ENCODE measurements at regions of chr17 and their contacts with region 1.

Region 1: GRCh38 chr17:42019509-42020404 is at the start of gene NKIRAS2:
- DNase-seq: peak; percentile 88 to 95 (median 92)
- ATAC-seq: peak; percentile 78
- H3K4me3 ChIP-seq: peak within 1 kb of the TSS; percentile 93
- H3K4me3 Mint-ChIP-seq: peak within 1 kb of the TSS; percentile 100
- H3K27ac ChIP-seq: peak within 1 kb of the TSS; percentile 64 to 80
- H3K27ac Mint-ChIP-seq: peak within 1 kb of the TSS; percentile 98
- H3K4me1 ChIP-seq: peaks cover 56% of the 10 kb centered on the region
- H3K4me1 Mint-ChIP-seq: peaks cover 66% of the 10 kb centered on the region
- H3K27me3 ChIP-seq: no peaks in the 10 kb centered on the region
- H3K27me3 Mint-ChIP-seq: no peaks in the 10 kb centered on the region
- CTCF ChIP-seq: peak; percentile 94
- total RNA-seq, gene NKIRAS2: 12.5 to 12.9 TPM

Region 2: DNA sequence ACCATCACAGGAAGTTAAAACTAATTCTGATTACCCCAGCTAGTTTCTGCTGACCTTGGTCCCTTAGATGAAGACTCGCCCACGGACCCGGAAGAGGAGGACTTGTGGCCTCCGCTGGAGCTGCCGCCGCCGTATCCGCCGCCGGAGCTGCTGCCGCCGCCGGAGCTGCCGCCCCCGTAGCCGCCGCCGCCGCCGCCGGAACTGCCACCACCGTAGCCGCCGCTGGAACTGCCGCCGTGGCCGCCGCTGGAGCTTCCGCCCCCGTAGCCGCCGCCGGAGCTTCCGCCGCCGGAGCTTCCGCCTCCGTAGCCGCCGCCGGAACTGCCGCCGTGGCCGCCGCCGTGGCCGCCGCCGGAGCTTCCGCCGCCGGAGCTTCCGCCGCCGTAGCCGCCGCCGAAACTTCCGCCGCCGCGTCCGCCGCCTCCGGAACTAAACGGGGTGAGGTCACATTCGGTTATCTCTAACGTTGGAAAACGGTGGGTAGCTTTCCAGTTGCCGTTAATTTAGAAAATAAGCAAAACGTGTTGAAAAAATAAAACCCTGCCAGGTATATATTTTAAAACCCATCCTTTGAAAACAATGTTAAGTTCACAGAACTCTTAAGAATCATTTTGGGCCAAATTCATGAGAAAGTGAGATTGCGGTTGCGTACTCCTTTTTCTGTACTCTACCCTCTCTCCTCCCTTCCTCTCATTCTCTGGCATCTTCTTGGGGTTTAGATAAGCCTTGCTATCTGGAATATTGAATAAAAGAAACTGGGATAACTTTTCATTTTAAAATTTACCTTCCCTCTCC is 1200.8 kb before region 1 on chr17:
- CTCF ChIA-PET with region 1: no interaction called
- POLR2A ChIA-PET with region 1: interaction called, 3 read pairs
- intact Hi-C with region 1: loop called in 1 of 2 experiments (anchors 5 kb)
- DNase-seq: peak; percentile 68 to 96 (median 80)
- ATAC-seq: peak; percentile 83
- H3K4me3 ChIP-seq: peak overlapping the region; percentile 75
- H3K4me3 Mint-ChIP-seq: peak overlapping the region; percentile 96
- H3K27ac ChIP-seq: peak overlapping the region; percentile 62 to 74
- H3K27ac Mint-ChIP-seq: peak overlapping the region; percentile 89
- H3K4me1 ChIP-seq: peaks cover 5% of the 10 kb centered on the region
- H3K4me1 Mint-ChIP-seq: peaks cover 33% of the 10 kb centered on the region
- H3K27me3 ChIP-seq: peaks cover 0 to 1% of the 10 kb centered on the region in 2 experiments
- H3K27me3 Mint-ChIP-seq: peaks cover 15% of the 10 kb centered on the region
- CTCF ChIP-seq: no peak

Region 3: GRCh38 chr17:41930009-41930832 is 89.5 kb before region 1 on chr17 and contains the start of gene ODAD4:
- CTCF ChIA-PET with region 1: interaction called, 10 read pairs
- POLR2A ChIA-PET with region 1: interaction called, 11 read pairs
- intact Hi-C with region 1: loop called in 1 of 2 experiments (anchors 2 kb)
- DNase-seq: peak; percentile 93 to 99 (median 95)
- ATAC-seq: peak; percentile 99
- H3K4me3 ChIP-seq: peak within 1 kb of the TSS; percentile 68
- H3K4me3 Mint-ChIP-seq: peak within 1 kb of the TSS; percentile 91
- H3K27ac ChIP-seq: peak within 1 kb of the TSS; percentile 75 to 92
- H3K27ac Mint-ChIP-seq: peak within 1 kb of the TSS; percentile 89
- H3K4me1 ChIP-seq: peaks cover 23% of the 10 kb centered on the region
- H3K4me1 Mint-ChIP-seq: peaks cover 19% of the 10 kb centered on the region
- H3K27me3 ChIP-seq: no peaks in the 10 kb centered on the region
- H3K27me3 Mint-ChIP-seq: no peaks in the 10 kb centered on the region
- CTCF ChIP-seq: peak; percentile 42
- total RNA-seq, gene ODAD4: 2.2 to 2.7 TPM

Region 4: DNA sequence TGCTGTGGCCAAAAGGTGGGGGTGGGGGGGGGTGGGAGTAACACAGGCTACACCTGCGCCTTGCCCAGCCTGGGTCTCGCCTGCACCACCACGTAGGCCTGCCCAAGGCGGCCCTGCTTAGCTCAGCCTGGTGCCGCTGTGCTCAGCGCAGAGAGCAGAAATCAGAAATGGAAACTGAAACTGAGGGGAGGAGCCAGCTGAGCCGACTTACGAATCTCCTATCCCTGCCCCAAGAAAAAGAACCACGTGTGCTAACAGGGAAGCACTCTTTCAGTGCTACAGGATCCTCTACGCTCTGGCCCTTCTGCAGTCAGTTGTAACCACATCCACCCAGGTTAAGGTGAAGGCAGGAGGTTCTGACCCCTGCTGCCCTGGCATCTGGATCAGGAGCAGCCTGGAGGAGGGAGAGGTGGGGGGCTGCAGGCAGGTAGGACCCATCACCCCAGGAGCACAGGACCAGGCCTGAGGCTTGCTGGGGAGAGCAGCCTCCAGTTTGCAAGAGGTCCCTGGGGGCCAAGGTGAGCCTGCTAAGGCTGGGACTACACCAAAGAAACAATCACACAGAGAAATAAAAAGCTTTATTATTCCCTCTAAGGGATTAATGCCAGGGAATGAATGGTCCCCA is 92.9 kb after region 1 on chr17 and contains the start of gene DHX58:
- CTCF ChIA-PET with region 1: interaction called, 10 read pairs
- POLR2A ChIA-PET with region 1: interaction called, 43 read pairs
- intact Hi-C with region 1: no loop called
- DNase-seq: peak; percentile 65 to 93 (median 73)
- ATAC-seq: peak; percentile 79
- H3K4me3 ChIP-seq: peak within 1 kb of the TSS; percentile 58
- H3K4me3 Mint-ChIP-seq: peak within 1 kb of the TSS; percentile 92
- H3K27ac ChIP-seq: peak within 1 kb of the TSS; percentile 66 to 79
- H3K27ac Mint-ChIP-seq: peak within 1 kb of the TSS; percentile 87
- H3K4me1 ChIP-seq: peaks cover 48% of the 10 kb centered on the region
- H3K4me1 Mint-ChIP-seq: peaks cover 50% of the 10 kb centered on the region
- H3K27me3 ChIP-seq: no peaks in the 10 kb centered on the region
- H3K27me3 Mint-ChIP-seq: no peaks in the 10 kb centered on the region
- CTCF ChIP-seq: no peak
- total RNA-seq, gene DHX58: 33.5 to 35.6 TPM

Region 5: GRCh38 chr17:42153919-42154742 is 134.4 kb after region 1 on chr17:
- CTCF ChIA-PET with region 1: interaction called, 3 read pairs
- POLR2A ChIA-PET with region 1: interaction called, 10 read pairs
- intact Hi-C with region 1: loop called in 1 of 2 experiments (anchors 1 kb)
- DNase-seq: peak in 3 of 14 experiments; percentile 4 to 48 (median 44)
- ATAC-seq: no peak
- H3K4me3 ChIP-seq: peak overlapping the region; percentile 84
- H3K4me3 Mint-ChIP-seq: peak overlapping the region; percentile 99
- H3K27ac ChIP-seq: peak overlapping the region; percentile 72 to 79
- H3K27ac Mint-ChIP-seq: peak overlapping the region; percentile 88
- H3K4me1 ChIP-seq: peaks cover 48% of the 10 kb centered on the region
- H3K4me1 Mint-ChIP-seq: peaks cover 32% of the 10 kb centered on the region
- H3K27me3 ChIP-seq: no peaks in the 10 kb centered on the region
- H3K27me3 Mint-ChIP-seq: no peaks in the 10 kb centered on the region
- CTCF ChIP-seq: no peak

Region 6: GRCh38 chr17:42517516-42517915 is 497.8 kb after region 1 on chr17:
- CTCF ChIA-PET with region 1: no interaction called
- POLR2A ChIA-PET with region 1: no interaction called
- intact Hi-C with region 1: loop called in 1 of 2 experiments (anchors 10 kb)
- DNase-seq: peak; percentile 69 to 90 (median 79)
- ATAC-seq: peak; percentile 93
- H3K4me3 ChIP-seq: no peak overlapping the region
- H3K4me3 Mint-ChIP-seq: no peak overlapping the region
- H3K27ac ChIP-seq: no peak overlapping the region
- H3K27ac Mint-ChIP-seq: no peak overlapping the region
- H3K4me1 ChIP-seq: peaks cover 6% of the 10 kb centered on the region
- H3K4me1 Mint-ChIP-seq: peaks cover 8% of the 10 kb centered on the region
- H3K27me3 ChIP-seq: no peaks in the 10 kb centered on the region
- H3K27me3 Mint-ChIP-seq: no peaks in the 10 kb centered on the region
- CTCF ChIP-seq: peak; percentile 97

Region 7: GRCh38 chr17:43068570-43069367 is 1049.0 kb after region 1 on chr17:
- CTCF ChIA-PET with region 1: no interaction called
- POLR2A ChIA-PET with region 1: no interaction called
- intact Hi-C with region 1: no loop called
- DNase-seq: no peak
- ATAC-seq: no peak
- H3K4me3 ChIP-seq: no peak overlapping the region
- H3K4me3 Mint-ChIP-seq: no peak overlapping the region
- H3K27ac ChIP-seq: no peak overlapping the region
- H3K27ac Mint-ChIP-seq: no peak overlapping the region
- H3K4me1 ChIP-seq: no peaks in the 10 kb centered on the region
- H3K4me1 Mint-ChIP-seq: no peaks in the 10 kb centered on the region
- H3K27me3 ChIP-seq: no peaks in the 10 kb centered on the region
- H3K27me3 Mint-ChIP-seq: no peaks in the 10 kb centered on the region
- CTCF ChIP-seq: no peak